WTC11 (cell line): ENCODE measurements at regions of chr5 and their contacts with region 1.

Region 1: GRCh38 chr5:41843456-41844370 is 26.5 kb downstream of the OXCT1 start:
- DNase-seq: peak; percentile 14
- ATAC-seq: peak; percentile 30; the same call in 1 of the 2 replicates
- H3K4me3 Mint-ChIP-seq: no peak overlapping the region
- H3K27ac Mint-ChIP-seq: no peak overlapping the region
- H3K4me1 Mint-ChIP-seq: no peaks in the 10 kb centered on the region
- H3K27me3 Mint-ChIP-seq: no peaks in the 10 kb centered on the region
- CTCF ChIP-seq: peak; percentile 59; the same call in 1 of the 2 replicates

Region 2: DNA sequence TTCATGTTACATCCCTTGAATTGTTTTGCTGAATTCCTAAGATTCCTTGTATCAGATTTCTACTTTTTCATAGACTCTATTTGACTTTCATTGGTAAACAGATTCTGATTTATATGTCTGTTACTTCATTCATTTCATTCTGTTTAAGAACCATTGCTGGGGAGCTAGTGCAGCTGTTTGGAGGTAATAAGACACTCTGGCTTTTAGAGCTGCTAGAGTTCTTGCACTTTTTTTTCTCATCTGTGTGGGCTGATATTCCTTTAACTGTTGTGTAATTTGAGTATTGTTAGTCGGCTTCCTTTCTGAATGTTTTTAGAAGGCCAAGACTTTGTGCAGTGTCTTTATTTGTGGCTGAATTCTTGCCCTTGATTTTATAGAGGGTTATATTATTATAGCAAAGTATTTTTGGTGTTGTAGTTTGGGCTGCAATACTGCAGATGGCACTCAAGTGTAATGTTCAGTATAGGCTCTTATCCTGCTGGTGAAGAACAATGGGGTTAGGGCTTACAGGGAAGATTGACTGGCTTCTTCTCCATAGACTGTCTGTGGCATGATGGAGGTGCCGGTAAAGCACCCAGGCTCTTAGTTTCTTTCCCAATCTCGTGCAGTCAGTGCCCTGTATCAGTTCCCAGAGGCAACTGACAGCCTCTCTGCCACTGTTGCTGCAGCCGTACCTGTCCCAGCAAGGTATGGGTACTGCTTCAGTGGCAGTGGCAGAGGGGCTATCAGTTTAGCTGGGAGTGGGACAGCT is 135.7 kb before region 1 on chr5:
- CTCF ChIA-PET with region 1: interaction called, 34 read pairs
- POLR2A ChIA-PET with region 1: no interaction called
- DNase-seq: peak; percentile 12
- ATAC-seq: peak; percentile 99
- H3K4me3 Mint-ChIP-seq: no peak overlapping the region
- H3K27ac Mint-ChIP-seq: no peak overlapping the region
- H3K4me1 Mint-ChIP-seq: no peaks in the 10 kb centered on the region; the same call in 1 of the 2 replicates
- H3K27me3 Mint-ChIP-seq: peaks cover 4% of the 10 kb centered on the region; the same call in 1 of the 2 replicates
- CTCF ChIP-seq: no peak; the same call in 1 of the 2 replicates